Head of caudate nucleus (tissue), 42 donors: ENCODE measurements at regions of chr1 and their contacts with region 1.

Region 1: GRCh38 chr1:244796718-244797406 is 38.6 kb upstream of the COX20 start:
- DNase-seq: peak in 40 of 42 donors; percentile 18 to 93 (median 78)

Region 2: DNA sequence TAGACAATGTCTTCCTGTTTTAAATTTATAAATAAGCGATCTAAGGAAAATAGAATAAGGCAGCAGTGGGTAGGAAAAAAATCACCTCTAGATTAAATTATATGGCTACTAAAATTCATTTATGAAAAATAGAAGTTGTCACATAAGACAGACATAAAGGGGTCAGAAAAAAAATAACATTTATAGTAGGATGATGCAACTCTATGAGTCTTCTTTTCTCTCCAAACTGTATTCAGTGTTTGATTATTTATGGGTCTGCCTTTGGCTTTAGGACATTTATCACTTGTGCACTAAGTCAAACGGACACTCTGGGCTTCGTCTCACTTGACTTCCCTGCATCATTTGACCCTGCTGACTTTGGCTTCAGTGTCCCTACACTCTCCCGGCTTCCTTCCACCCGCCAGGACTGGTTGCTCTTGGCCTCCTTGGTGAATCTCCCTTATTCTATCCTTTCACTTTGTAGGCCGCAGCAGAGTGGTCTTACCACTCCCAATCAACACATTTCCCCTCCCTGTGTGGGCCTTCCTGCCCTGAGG is 191.0 kb before region 1 on chr1:
- intact Hi-C with region 1: loop called (anchors 2 kb)
- DNase-seq: no peak